Caco-2 (cell line): ENCODE measurements at regions of chr11 and their contacts with region 1.

Region 1: DNA sequence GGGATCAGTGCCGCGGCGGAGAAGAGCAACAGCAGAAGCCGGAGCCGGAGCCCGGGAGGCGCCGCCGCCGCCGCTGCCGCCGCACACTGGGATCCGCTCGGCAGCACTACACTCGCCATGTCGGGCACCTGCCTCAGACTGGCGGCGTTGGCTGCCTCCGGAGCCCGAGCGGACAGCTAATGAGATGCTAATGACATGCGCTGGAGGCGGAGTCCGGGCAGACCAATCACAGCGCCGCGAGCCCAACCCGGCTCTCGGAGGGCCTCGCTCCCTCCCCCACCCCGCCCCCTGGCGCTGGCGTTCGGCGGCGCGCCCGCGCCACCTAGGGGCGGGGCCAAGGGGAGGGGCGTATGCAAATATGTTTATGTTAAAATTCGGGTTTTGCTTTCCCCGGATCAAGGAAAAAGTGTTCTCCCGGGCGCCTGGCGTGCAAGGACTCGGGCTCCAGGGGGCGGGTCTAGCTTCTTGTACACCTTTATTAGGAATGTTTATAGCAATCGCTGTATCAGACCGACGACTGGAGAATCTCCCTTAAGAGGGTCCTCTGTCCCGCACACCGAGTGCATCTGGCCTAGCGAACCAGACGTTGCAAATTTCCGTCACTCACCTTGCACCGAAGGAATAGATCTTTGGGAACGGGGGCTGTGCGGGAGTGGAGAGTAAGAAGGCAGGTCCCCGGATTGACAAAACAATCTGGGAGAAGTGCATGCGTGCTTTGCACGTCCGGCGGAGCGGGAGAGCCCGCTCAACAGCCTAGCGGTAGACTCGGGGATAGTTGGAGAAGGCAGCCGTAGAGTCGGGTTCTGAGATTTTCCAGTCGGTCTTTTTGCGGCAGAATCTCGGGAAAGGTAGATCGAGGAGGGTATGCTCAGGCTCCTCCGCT is at the start of gene CADM1:
- DNase-seq: peak; percentile 99 to 100
- H3K4me3 ChIP-seq: peak within 1 kb of the TSS; percentile 76
- H3K4me3 Mint-ChIP-seq: no peak within 1 kb of the TSS
- H3K27ac Mint-ChIP-seq: peak within 1 kb of the TSS; percentile 90
- H3K4me1 ChIP-seq: peaks cover 24% of the 10 kb centered on the region
- H3K4me1 Mint-ChIP-seq: no peaks in the 10 kb centered on the region
- H3K27me3 ChIP-seq: no peaks in the 10 kb centered on the region; the same call in 1 of the 2 replicates
- H3K27me3 Mint-ChIP-seq: no peaks in the 10 kb centered on the region
- CTCF ChIP-seq: peak; percentile 73 to 90
- total RNA-seq, gene CADM1: 440 and 534 TPM in 2 replicates

Region 2: GRCh38 chr11:115324581-115325432 is 179.7 kb before region 1 on chr11:
- CTCF ChIA-PET with region 1: interaction called, 8 read pairs
- POLR2A ChIA-PET with region 1: no interaction called
- intact Hi-C with region 1: loop called (anchors 2 kb)
- DNase-seq: peak; percentile 59 to 73
- H3K4me3 ChIP-seq: no peak overlapping the region
- H3K4me3 Mint-ChIP-seq: no peak overlapping the region
- H3K27ac Mint-ChIP-seq: peak overlapping the region; percentile 18
- H3K4me1 ChIP-seq: peaks cover 4% of the 10 kb centered on the region; the same call in 1 of the 2 replicates
- H3K4me1 Mint-ChIP-seq: peaks cover 23% of the 10 kb centered on the region
- H3K27me3 ChIP-seq: no peaks in the 10 kb centered on the region
- H3K27me3 Mint-ChIP-seq: no peaks in the 10 kb centered on the region
- CTCF ChIP-seq: peak; percentile 94 to 97

Region 3: DNA sequence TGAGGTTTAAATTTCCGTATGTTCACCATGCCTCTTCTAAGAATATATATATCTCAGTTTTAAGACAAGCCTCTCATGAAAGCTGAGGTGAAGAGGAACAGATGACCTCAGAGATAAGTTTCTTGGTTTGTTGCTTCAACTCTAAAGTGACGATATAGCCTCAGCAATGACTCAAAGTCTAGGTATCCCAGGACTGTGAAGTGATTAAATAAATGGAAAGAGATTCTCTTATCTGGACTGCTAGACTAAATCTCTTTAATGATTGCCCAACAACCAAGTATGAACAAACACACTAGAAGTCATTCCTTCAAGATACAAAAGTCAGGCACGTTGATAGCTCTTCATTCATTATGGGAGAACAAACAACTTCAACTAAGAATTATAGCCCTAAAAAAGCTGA is 15.6 kb before region 1 on chr11:
- CTCF ChIA-PET with region 1: interaction called, 13 read pairs
- POLR2A ChIA-PET with region 1: interaction called, 15 read pairs
- intact Hi-C with region 1: loop called (anchors 1 kb)
- DNase-seq: peak; percentile 59 to 87
- H3K4me3 ChIP-seq: no peak overlapping the region
- H3K4me3 Mint-ChIP-seq: peak overlapping the region; percentile 67
- H3K27ac Mint-ChIP-seq: peak overlapping the region; percentile 92
- H3K4me1 ChIP-seq: peaks cover 66% of the 10 kb centered on the region
- H3K4me1 Mint-ChIP-seq: peaks cover 64% of the 10 kb centered on the region
- H3K27me3 ChIP-seq: no peaks in the 10 kb centered on the region
- H3K27me3 Mint-ChIP-seq: no peaks in the 10 kb centered on the region
- CTCF ChIP-seq: no peak

Region 4: GRCh38 chr11:115548878-115549528 is 44.5 kb after region 1 on chr11:
- CTCF ChIA-PET with region 1: interaction called, 26 read pairs
- POLR2A ChIA-PET with region 1: interaction called, 7 read pairs
- intact Hi-C with region 1: loop called (anchors 1 kb)
- DNase-seq: peak; percentile 91 to 96
- H3K4me3 ChIP-seq: no peak overlapping the region
- H3K4me3 Mint-ChIP-seq: peak overlapping the region; percentile 36
- H3K27ac Mint-ChIP-seq: peak overlapping the region; percentile 77
- H3K4me1 ChIP-seq: peaks cover 27% of the 10 kb centered on the region
- H3K4me1 Mint-ChIP-seq: peaks cover 30% of the 10 kb centered on the region
- H3K27me3 ChIP-seq: no peaks in the 10 kb centered on the region
- H3K27me3 Mint-ChIP-seq: no peaks in the 10 kb centered on the region
- CTCF ChIP-seq: peak; percentile 32 to 65

Region 5: GRCh38 chr11:116193321-116194131 is 689.0 kb after region 1 on chr11:
- CTCF ChIA-PET with region 1: no interaction called
- POLR2A ChIA-PET with region 1: no interaction called
- intact Hi-C with region 1: loop called (anchors 1 kb)
- DNase-seq: peak; percentile 99
- H3K4me3 ChIP-seq: peak overlapping the region; percentile 58
- H3K4me3 Mint-ChIP-seq: peak overlapping the region; percentile 68
- H3K27ac Mint-ChIP-seq: peak overlapping the region; percentile 51
- H3K4me1 ChIP-seq: peaks cover 36% of the 10 kb centered on the region
- H3K4me1 Mint-ChIP-seq: peaks cover 42% of the 10 kb centered on the region
- H3K27me3 ChIP-seq: no peaks in the 10 kb centered on the region
- H3K27me3 Mint-ChIP-seq: no peaks in the 10 kb centered on the region
- CTCF ChIP-seq: peak; percentile 35 to 51